HCT116 (cell line): ENCODE measurements at regions of chr3 and their contacts with region 1.

Region 1: DNA sequence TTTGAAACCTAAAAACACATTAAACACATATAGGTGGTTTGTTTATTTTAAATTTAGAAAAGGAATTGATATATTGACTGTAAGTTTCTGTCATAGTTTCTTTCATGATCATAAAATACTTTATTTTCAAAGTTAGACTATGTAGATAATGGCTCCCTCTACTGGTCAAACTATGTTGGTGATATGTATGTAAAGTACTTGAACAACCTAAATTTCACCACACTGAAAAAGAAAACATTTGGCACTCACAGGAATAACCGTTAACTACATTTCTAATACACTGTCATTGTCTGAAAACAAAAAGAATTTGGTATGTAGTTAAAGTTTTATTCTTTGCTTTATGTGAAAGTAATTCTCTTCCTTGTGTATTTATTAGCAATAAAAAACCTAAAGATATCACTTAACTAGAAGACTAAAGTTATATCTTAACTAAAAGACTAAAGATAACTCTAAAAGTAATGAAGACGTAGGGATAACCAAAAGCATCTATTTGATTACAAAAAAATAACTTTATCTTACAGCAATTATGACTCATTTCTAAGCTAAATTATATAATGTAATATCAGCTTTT is 427.5 kb downstream of the VGLL3 start:
- DNase-seq: peak; percentile 3
- ATAC-seq: no peak
- H3K4me3 ChIP-seq: no peak overlapping the region
- H3K27ac ChIP-seq: no peak overlapping the region
- H3K4me1 ChIP-seq: no peaks in the 10 kb centered on the region
- H3K27me3 ChIP-seq: no peaks in the 10 kb centered on the region
- CTCF ChIP-seq: peak in 2 of 3 experiments; percentile 35 to 69; a peak in 4 of 6 replicates
- POLR2A ChIP-seq: no peak
- RAD21 ChIP-seq: no peak

Region 2: DNA sequence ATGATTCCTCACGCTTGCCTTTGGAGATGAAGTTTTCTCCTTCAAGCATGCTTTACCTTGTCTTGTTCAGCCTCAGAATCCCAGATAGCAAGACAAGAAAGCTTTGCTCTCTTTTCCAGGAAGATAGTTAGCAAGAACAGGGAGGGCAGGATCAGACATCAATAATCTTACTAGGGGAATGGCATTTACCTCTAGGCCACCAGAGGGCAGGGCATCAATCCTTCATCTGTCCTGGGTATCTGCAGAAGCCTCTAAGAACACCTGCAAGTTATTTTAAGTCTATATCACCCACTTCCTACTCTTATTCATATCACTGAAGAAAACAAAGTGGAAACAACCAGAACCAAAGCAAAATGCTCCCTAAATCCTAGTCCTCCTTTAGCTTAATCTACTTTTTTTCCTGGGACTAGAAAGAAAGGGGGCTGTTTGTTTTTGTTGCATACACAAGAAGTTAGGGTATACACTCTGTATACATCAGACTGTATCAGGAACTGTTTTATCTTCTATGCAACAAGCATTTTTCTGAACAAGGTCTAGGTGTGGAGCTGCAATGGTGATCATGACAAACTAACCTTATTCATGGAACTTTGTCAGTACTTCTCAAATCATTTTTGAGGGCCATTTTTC is 742.2 kb before region 1 on chr3:
- CTCF ChIA-PET with region 1: no interaction called
- POLR2A ChIA-PET with region 1: no interaction called
- RAD21 ChIA-PET with region 1: no interaction called
- intact Hi-C with region 1: loop called (anchors 10 kb)
- DNase-seq: no peak
- ATAC-seq: no peak
- H3K4me3 ChIP-seq: no peak overlapping the region
- H3K27ac ChIP-seq: no peak overlapping the region
- H3K4me1 ChIP-seq: no peaks in the 10 kb centered on the region
- H3K27me3 ChIP-seq: no peaks in the 10 kb centered on the region
- CTCF ChIP-seq: peak in 2 of 3 experiments; percentile 27 to 32; a peak in 2 of 6 replicates
- POLR2A ChIP-seq: no peak
- RAD21 ChIP-seq: no peak

Region 3: DNA sequence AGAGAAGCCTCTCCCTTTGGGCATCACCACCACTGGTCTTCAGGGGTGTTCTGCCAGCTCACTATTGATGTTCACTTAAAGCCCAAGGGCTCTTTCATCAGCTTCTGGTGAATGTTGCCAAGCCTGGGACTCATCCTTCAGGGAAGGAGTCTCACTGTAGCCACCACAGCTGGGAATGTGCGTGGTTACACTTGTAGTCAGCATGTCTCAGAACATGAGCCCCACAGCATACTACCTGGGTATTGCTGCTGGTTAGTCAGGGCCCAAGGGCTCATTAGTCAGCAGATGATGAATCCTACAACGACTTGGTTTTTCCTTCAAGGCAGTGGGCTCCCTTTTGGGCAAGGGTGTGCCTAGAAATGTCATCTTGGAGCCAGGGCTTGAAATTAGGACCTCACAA is 14.6 kb after region 1 on chr3:
- CTCF ChIA-PET with region 1: no interaction called
- POLR2A ChIA-PET with region 1: no interaction called
- RAD21 ChIA-PET with region 1: no interaction called
- intact Hi-C with region 1: no loop called
- DNase-seq: no peak
- ATAC-seq: no peak
- H3K4me3 ChIP-seq: no peak overlapping the region
- H3K27ac ChIP-seq: no peak overlapping the region
- H3K4me1 ChIP-seq: no peaks in the 10 kb centered on the region
- H3K27me3 ChIP-seq: no peaks in the 10 kb centered on the region
- CTCF ChIP-seq: no peak
- POLR2A ChIP-seq: no peak
- RAD21 ChIP-seq: no peak